Activated T-helper 1 cell treated with anti-CD3 and anti-CD28 coated beads, Interleukin-12 subunit alpha, Interleukin-12 subunit beta, Interleukin-2, Interleukin-4 antibody, amounts not matched to agents 30 ng/mL and 10 ng/mL and 1 ng/mL, durations not matched to agents 14 hours and 24 hours and 36 hours (primary cell): ENCODE measurements at regions of chr11 and their contacts with region 1.

Region 1: GRCh38 chr11:96242971-96243647 is 99.9 kb downstream of the MAML2 start:
- DNase-seq: peak; percentile 78
- H3K4me3 Mint-ChIP-seq: peak overlapping the region; percentile 79
- H3K27ac Mint-ChIP-seq: peak overlapping the region; percentile 94
- H3K4me1 Mint-ChIP-seq: peaks cover 46% of the 10 kb centered on the region
- H3K27me3 Mint-ChIP-seq: no peaks in the 10 kb centered on the region

Region 2: DNA sequence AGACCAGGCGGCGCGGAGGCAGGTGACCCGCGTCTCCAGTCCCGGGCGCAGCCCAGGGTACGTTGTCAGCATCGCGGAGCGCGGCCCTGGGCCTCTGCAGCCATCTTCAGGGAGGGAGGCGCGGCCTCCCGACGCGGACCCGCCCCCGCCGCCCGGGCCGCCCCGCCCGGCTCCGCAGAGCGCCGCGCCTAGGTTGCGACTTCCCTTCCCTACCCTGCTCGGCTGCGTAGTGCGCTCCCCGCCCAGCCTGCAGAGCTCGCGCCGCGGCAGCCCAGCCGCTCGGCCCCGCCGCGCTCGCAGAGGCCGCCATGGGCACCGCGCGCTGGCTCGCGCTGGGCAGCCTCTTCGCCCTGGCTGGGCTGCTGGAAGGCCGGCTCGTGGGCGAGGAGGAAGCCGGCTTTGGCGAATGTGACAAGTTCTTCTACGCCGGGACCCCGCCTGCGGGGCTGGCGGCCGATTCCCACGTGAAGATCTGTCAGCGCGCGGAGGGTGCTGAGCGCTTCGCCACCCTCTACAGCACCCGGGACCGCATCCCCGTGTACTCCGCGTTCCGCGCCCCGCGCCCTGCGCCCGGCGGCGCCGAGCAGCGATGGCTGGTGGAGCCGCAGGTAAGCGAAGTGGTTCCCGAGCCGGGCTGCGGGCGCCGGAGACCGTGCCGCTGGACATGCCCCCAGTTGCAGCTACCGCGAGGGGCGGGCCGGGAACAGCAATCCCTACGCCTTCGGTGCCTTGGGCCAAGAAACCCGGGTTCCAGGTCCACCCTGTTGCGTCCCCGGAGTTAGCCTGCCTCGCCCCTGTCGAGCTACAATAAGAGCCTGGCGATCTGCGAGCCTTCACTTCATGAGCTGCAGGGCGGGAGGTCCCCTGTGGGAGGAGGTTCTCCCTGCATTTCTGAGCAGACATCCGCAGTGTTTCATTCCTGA is 1153.2 kb before region 1 on chr11 and contains the start of gene ENDOD1:
- intact Hi-C with region 1: loop called (anchors 10 kb)
- DNase-seq: peak; percentile 85
- H3K4me3 Mint-ChIP-seq: peak within 1 kb of the TSS; percentile 89
- H3K27ac Mint-ChIP-seq: peak within 1 kb of the TSS; percentile 96
- H3K4me1 Mint-ChIP-seq: peaks cover 83% of the 10 kb centered on the region
- H3K27me3 Mint-ChIP-seq: no peaks in the 10 kb centered on the region
- total RNA-seq, gene ENDOD1: 33.8 and 34.3 TPM in 2 replicates

Region 3: GRCh38 chr11:95923728-95924413 is 319.2 kb before region 1 on chr11 and contains the start of gene MTMR2:
- intact Hi-C with region 1: loop called (anchors 10 kb)
- DNase-seq: peak; percentile 39
- H3K4me3 Mint-ChIP-seq: peak within 1 kb of the TSS; percentile 100
- H3K27ac Mint-ChIP-seq: peak within 1 kb of the TSS; percentile 86
- H3K4me1 Mint-ChIP-seq: peaks cover 31% of the 10 kb centered on the region
- H3K27me3 Mint-ChIP-seq: peaks cover 3% of the 10 kb centered on the region
- total RNA-seq, gene MTMR2: 41.3 and 41.7 TPM in 2 replicates

Region 4: DNA sequence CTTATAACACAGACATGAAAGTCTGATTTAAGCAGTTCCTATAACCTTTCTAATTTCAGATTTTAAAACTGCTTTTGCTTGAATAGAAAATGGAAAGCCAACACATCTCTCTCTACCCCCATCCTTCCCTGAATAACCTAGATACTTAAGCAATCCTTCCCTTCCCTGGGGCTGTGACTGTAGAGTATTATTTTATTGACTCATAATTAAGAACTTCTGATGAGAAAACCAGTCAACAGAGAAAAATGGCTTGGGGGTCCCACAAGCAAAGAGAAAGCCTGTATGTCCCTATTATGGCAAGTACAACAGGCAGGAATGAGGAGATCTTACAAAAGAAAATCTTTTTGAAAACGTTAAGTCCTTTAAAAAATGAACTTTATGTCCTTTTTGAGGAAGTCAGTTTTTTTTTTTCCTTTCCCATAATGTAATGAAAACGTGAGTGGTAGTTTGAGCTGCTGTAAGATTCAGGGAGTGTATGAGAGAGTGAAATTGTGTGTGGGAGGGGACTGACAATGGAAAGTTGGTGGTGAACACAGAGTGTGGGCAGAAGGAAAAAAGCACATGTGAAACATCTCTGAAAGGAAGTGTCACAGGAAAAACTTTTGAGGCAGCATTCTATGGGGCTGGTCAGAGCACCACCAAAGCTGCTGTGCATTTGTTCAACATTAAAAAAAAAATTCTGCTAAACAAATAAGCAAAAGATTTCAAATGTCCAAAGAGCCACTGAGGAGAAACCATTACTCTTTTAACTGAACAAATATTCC is 54.7 kb before region 1 on chr11:
- intact Hi-C with region 1: no loop called
- DNase-seq: no peak
- H3K4me3 Mint-ChIP-seq: peak overlapping the region; percentile 4
- H3K27ac Mint-ChIP-seq: peak overlapping the region; percentile 74
- H3K4me1 Mint-ChIP-seq: peaks cover 45% of the 10 kb centered on the region
- H3K27me3 Mint-ChIP-seq: no peaks in the 10 kb centered on the region

Region 5: GRCh38 chr11:96254087-96254486 is 11.0 kb after region 1 on chr11:
- intact Hi-C with region 1: loop called (anchors 1 kb)
- DNase-seq: peak; percentile 30
- H3K4me3 Mint-ChIP-seq: peak overlapping the region; percentile 77
- H3K27ac Mint-ChIP-seq: peak overlapping the region; percentile 92
- H3K4me1 Mint-ChIP-seq: peaks cover 75% of the 10 kb centered on the region
- H3K27me3 Mint-ChIP-seq: no peaks in the 10 kb centered on the region

Region 6: GRCh38 chr11:96293598-96294021 is 50.5 kb after region 1 on chr11:
- intact Hi-C with region 1: loop called (anchors 2 kb)
- DNase-seq: no peak
- H3K4me3 Mint-ChIP-seq: no peak overlapping the region
- H3K27ac Mint-ChIP-seq: no peak overlapping the region
- H3K4me1 Mint-ChIP-seq: peaks cover 44% of the 10 kb centered on the region
- H3K27me3 Mint-ChIP-seq: no peaks in the 10 kb centered on the region

Region 7: GRCh38 chr11:96500440-96500839 is 257.3 kb after region 1 on chr11:
- intact Hi-C with region 1: no loop called
- DNase-seq: no peak
- H3K4me3 Mint-ChIP-seq: no peak overlapping the region
- H3K27ac Mint-ChIP-seq: no peak overlapping the region
- H3K4me1 Mint-ChIP-seq: no peaks in the 10 kb centered on the region
- H3K27me3 Mint-ChIP-seq: peaks cover 1% of the 10 kb centered on the region